MCF 10A (cell line): ENCODE measurements at regions of chr20 and their contacts with region 1.

Region 1: GRCh38 chr20:21303061-21303871 is at the start of gene XRN2:
- DNase-seq: peak; percentile 95
- H3K4me3 Mint-ChIP-seq: peak within 1 kb of the TSS; percentile 87
- H3K27ac Mint-ChIP-seq: peak within 1 kb of the TSS; percentile 99
- H3K4me1 Mint-ChIP-seq: peaks cover 18% of the 10 kb centered on the region
- H3K27me3 Mint-ChIP-seq: no peaks in the 10 kb centered on the region
- CTCF ChIP-seq: no peak
- total RNA-seq, gene XRN2: 60.8 and 67.8 TPM in 2 replicates

Region 2: DNA sequence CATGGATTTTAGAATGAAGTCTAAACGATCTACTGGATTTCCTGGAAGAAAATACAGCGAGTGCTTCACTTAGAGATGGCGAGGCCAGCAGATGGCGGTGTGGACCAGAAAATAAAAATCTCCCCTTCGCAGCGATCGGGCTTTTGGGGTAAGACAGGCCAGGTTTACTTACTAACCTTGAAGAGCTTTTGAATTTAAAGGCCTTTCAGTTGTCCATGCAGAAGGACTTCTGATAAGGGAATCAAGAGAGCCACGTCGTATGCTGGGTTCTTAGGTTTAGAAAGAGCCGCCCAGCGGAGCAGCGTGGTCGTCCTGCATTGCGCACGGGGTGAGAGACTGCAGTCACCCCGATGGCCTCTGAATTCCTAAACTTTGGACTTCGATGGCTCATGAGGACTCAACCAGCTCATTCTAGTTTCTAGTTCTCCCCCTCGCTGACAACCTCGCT is 465.7 kb before region 1 on chr20:
- CTCF ChIA-PET with region 1: interaction called, 10 read pairs
- POLR2A ChIA-PET with region 1: no interaction called
- intact Hi-C with region 1: no loop called
- DNase-seq: peak; percentile 50
- H3K4me3 Mint-ChIP-seq: no peak overlapping the region
- H3K27ac Mint-ChIP-seq: no peak overlapping the region
- H3K4me1 Mint-ChIP-seq: no peaks in the 10 kb centered on the region
- H3K27me3 Mint-ChIP-seq: peaks cover 17% of the 10 kb centered on the region
- CTCF ChIP-seq: peak; percentile 79

Region 3: DNA sequence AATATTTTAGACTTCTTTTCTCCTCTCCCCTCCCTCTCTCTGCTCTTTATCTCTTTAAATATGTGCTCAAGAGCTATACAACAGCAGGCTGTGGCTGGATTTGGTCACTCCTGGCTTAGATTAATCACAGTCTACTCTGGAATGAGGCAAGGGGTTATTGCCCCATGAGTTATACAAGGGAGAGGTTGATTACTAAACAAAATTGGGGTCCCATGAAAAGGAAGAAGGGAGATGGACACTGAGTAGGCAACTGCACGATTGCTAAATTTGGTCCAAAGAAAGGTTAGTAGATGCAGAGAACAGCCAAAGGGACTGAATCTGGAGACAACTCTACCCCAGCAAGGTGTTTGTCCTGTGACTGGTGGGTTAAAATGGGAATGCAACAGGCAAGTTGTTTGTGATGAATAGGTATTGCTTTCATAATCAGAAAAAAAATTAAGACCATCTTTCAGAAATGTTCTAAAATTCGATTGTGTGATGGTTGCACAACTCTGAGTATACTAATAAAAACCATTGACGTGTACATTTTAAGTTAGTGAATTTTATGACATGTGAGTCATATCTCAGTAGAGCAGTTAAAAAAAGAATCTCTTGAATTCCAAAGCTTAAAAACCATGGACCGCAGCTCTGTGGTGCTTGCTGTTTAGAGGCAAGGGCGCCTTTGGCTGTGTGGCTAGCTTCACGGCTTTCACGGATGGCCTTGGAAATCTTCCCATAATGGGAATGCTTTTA is 120.3 kb before region 1 on chr20:
- CTCF ChIA-PET with region 1: no interaction called
- POLR2A ChIA-PET with region 1: interaction called, 25 read pairs
- intact Hi-C with region 1: loop called (anchors 5 kb)
- DNase-seq: peak; percentile 82
- H3K4me3 Mint-ChIP-seq: peak overlapping the region; percentile 21
- H3K27ac Mint-ChIP-seq: peak overlapping the region; percentile 61
- H3K4me1 Mint-ChIP-seq: peaks cover 40% of the 10 kb centered on the region
- H3K27me3 Mint-ChIP-seq: no peaks in the 10 kb centered on the region
- CTCF ChIP-seq: no peak

Region 4: GRCh38 chr20:21315138-21315537 is 11.9 kb after region 1 on chr20:
- CTCF ChIA-PET with region 1: interaction called, 4 read pairs
- POLR2A ChIA-PET with region 1: interaction called, 104 read pairs
- intact Hi-C with region 1: no loop called
- DNase-seq: peak; percentile 54
- H3K4me3 Mint-ChIP-seq: no peak overlapping the region
- H3K27ac Mint-ChIP-seq: no peak overlapping the region
- H3K4me1 Mint-ChIP-seq: peaks cover 25% of the 10 kb centered on the region
- H3K27me3 Mint-ChIP-seq: no peaks in the 10 kb centered on the region
- CTCF ChIP-seq: no peak

Region 5: GRCh38 chr20:21352703-21353102 is 49.4 kb after region 1 on chr20:
- CTCF ChIA-PET with region 1: interaction called, 4 read pairs
- POLR2A ChIA-PET with region 1: interaction called, 8 read pairs
- intact Hi-C with region 1: loop called (anchors 5 kb)
- DNase-seq: no peak
- H3K4me3 Mint-ChIP-seq: no peak overlapping the region
- H3K27ac Mint-ChIP-seq: no peak overlapping the region
- H3K4me1 Mint-ChIP-seq: no peaks in the 10 kb centered on the region
- H3K27me3 Mint-ChIP-seq: no peaks in the 10 kb centered on the region
- CTCF ChIP-seq: no peak

Region 6: DNA sequence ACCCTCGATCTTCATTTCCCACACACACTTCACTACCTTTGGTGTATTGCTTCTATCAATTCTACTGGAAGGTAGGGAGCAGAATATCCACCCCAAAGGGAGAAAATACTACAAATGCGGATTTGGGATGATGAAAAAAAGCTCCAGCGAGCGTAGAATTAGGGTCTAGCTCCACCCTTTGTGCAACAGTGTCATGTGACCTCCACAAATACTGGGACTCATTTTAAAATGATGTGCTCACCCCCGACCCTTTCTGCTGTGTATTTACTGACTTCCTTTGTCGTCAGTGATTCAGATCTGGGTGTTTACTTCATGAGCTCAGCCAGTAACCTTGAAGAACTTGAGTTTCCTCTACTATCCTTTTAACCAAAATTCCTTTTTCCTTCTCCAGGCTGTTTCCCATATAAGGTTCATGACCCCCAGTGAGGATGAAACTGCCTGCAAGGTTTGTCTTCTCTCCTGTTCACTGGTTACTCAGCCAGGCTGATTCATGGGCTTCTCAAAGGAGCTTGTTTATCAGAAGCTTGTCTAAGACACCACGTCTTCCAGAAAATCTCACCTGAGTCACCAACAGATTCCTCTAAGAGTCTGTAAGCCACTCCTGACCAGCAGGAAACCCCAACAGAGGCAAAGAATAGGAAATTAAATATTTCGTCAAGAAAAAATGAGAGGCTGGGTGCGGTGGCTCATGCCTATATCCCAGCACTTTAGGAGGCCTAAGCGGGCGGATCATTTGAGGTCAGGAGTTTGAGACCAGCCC is 362.6 kb after region 1 on chr20:
- CTCF ChIA-PET with region 1: no interaction called
- POLR2A ChIA-PET with region 1: no interaction called
- intact Hi-C with region 1: no loop called
- DNase-seq: peak; percentile 27
- H3K4me3 Mint-ChIP-seq: no peak overlapping the region
- H3K27ac Mint-ChIP-seq: no peak overlapping the region
- H3K4me1 Mint-ChIP-seq: no peaks in the 10 kb centered on the region
- H3K27me3 Mint-ChIP-seq: no peaks in the 10 kb centered on the region
- CTCF ChIP-seq: no peak